Dendritic cell treated with granulocyte-macrophage colony-stimulating factor and Interleukin-4, amounts not matched to agents 40 ng/mL and 50 ng/mL, for 4 days (primary cell): ENCODE measurements at regions of chr2 and their contacts with region 1.

Region 1: DNA sequence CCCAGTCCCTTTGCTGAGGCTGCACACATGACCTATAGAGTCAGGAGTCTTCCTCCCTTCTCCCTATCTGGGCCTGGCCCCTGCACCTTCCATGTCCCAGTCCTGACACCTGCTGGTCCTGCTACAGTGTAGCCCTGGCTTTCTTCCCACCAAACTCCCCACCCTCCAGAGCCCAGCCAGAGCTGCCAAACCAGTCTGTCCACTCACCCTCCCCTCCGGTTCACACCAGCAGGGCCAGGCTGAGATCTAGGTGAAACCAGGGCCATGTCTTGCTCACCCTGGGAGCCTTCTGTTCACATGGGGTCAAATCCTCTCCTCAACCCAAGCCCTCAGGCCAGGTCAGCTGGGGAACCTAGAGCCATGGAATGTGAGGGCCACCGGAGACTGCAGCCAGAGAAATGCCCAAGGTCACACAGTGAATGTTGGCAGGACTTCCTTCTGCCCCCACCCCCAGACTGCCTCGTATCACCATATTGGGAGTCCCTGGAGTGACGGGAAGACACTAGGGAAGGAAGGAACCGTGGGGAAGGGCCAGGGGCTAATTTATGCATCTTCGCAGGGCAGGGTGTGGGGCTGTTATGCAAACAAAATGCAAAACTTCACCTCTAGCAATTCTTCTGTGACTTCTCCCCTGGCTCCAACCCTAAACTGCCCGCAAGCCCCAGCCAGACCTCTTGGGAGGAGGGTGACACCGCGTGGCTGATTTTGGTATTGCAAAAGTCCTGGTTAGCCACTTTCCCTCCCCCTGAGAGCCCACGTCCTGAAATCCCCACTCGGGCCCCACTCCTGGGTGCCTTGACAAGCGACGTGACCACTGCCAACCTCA is 14.6 kb downstream of the TNS1 start:
- H3K4me3 Mint-ChIP-seq: no peak overlapping the region
- H3K27ac Mint-ChIP-seq: no peak overlapping the region
- H3K4me1 Mint-ChIP-seq: no peaks in the 10 kb centered on the region
- H3K27me3 Mint-ChIP-seq: peaks cover 1% of the 10 kb centered on the region

Region 2: DNA sequence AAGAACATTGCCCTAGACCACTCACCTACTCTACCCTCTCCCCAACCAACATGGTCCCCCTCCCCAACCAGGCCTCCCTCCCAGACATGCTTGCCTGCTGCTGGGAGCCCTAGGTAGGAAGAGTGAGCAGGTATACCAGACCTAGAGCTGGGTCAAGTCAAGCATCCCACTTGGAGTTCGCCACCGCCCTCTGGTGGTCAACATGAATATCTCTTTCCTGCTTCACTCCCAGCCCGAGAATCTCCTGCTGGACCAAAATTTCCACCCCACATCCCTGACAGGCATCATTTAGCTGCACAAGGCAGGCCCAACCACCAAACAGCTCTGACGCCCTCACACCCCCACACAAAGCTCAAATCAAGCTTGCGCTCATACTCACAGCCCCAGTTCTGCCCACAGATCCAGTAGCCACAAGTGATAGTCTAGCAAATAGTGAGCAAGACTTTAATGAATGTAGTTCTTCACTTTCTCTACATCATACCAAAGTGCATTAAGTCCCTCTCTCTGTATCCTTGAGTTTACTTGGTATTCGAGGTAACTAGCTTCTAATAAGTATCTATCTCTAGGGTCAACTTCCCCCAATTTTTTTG is 101.4 kb before region 1 on chr2:
- intact Hi-C with region 1: loop called (anchors 2 kb)
- H3K4me3 Mint-ChIP-seq: no peak overlapping the region
- H3K27ac Mint-ChIP-seq: no peak overlapping the region
- H3K4me1 Mint-ChIP-seq: peaks cover 24% of the 10 kb centered on the region
- H3K27me3 Mint-ChIP-seq: no peaks in the 10 kb centered on the region

Region 3: GRCh38 chr2:218648088-218648786 is 660.0 kb after region 1 on chr2:
- intact Hi-C with region 1: no loop called
- H3K4me3 Mint-ChIP-seq: no peak overlapping the region
- H3K27ac Mint-ChIP-seq: no peak overlapping the region
- H3K4me1 Mint-ChIP-seq: peaks cover 4% of the 10 kb centered on the region
- H3K27me3 Mint-ChIP-seq: no peaks in the 10 kb centered on the region